Prostate gland (tissue), 2 donors: ENCODE measurements at regions of chr11 and their contacts with region 1.

Region 1: DNA sequence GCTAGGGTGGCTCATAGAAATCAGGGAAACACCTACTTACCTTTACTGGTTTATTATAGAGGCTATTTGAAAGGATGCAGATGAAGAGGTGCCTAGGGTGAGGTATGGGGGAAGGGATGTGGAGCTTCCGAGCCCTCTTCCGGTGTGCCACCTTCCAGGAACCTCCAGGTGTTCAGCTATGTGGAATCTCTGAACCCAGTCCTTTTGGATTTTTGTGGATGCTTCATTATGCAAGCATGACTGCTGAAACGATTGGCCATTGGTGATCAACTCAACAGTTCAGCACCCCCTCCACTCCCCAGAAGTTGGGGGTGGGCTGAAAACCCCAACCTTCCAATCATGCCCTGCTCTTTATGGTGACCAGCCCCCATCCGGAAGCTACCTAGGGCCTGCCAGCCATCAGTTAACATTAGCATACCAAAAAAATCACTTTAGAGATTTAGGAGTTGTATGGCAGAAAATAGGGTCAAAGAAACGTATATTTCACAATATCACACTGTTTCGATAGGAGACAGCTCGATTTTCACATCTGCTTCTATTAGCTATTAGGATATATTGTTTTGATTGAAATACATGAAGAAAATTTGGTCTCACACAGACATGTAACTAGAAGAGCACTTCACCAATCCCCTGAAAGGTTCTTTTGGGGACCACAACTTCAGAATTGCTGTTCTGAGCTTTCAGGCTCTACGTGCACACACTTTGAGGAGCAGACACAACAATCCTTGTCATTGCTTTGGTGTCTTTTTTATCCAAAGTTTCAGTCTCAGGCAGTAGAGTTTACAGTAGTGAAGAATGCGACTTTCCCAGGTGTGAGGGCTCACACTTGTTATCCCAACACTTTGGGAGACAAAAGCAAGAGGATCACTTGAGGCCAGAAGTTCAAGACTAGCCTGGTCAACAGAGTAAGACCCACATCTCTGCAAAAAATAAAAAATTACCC is 3.3 kb upstream of the POLR2G start:
- DNase-seq: no peak
- H3K4me3 ChIP-seq: no peak overlapping the region
- H3K27ac ChIP-seq: no peak overlapping the region
- H3K4me1 ChIP-seq: peaks cover 8% of the 10 kb centered on the region
- H3K27me3 ChIP-seq: no peaks in the 10 kb centered on the region
- CTCF ChIP-seq: no peak
- POLR2A ChIP-seq: no peak

Region 2: GRCh38 chr11:62726915-62727763 is 31.0 kb before region 1 on chr11 and contains the start of gene HNRNPUL2:
- intact Hi-C with region 1: loop called (anchors 5 kb)
- DNase-seq: peak; percentile 97
- H3K4me3 ChIP-seq: peak within 1 kb of the TSS; percentile 79 to 90
- H3K27ac ChIP-seq: peak within 1 kb of the TSS; percentile 89 to 97
- H3K4me1 ChIP-seq: peaks cover 9% of the 10 kb centered on the region
- H3K27me3 ChIP-seq: no peaks in the 10 kb centered on the region
- CTCF ChIP-seq: peak in 2 of 4 experiments; percentile 28 to 40
- POLR2A ChIP-seq: peak; percentile 93
- total RNA-seq, gene HNRNPUL2: 26.6 to 33.5 TPM